Head of caudate nucleus (tissue), 42 donors: ENCODE measurements at regions of chr15 and their contacts with region 1.

Region 1: GRCh38 chr15:66700802-66701421 is 1.1 kb upstream of the SMAD6 start:
- DNase-seq: peak; percentile 62 to 93 (median 83)

Region 2: GRCh38 chr15:66619151-66619903 is 81.6 kb before region 1 on chr15:
- intact Hi-C with region 1: loop called (anchors 10 kb)
- DNase-seq: peak; percentile 33 to 82 (median 62)